Endothelial cell of umbilical vein (primary cell): ENCODE measurements at regions of chr16 and their contacts with region 1.

Region 1: GRCh38 chr16:68528686-68529379 is 10.3 kb upstream of the ZFP90 start:
- DNase-seq: peak; percentile 77
- H3K4me3 ChIP-seq: no peak overlapping the region
- H3K27ac ChIP-seq: no peak overlapping the region
- H3K4me1 ChIP-seq: peaks cover 10% of the 10 kb centered on the region
- H3K27me3 ChIP-seq: peaks cover 2 to 3% of the 10 kb centered on the region in 2 experiments
- CTCF ChIP-seq: peak; percentile 88 to 96
- POLR2A ChIP-seq: no peak

Region 2: GRCh38 chr16:68499006-68499405 is 29.8 kb before region 1 on chr16:
- CTCF ChIA-PET with region 1: no interaction called
- POLR2A ChIA-PET with region 1: no interaction called
- dilution Hi-C with region 1: no loop called
- intact Hi-C with region 1: no loop called
- DNase-seq: no peak
- H3K4me3 ChIP-seq: no peak overlapping the region
- H3K27ac ChIP-seq: no peak overlapping the region
- H3K4me1 ChIP-seq: no peaks in the 10 kb centered on the region
- H3K27me3 ChIP-seq: no peaks in the 10 kb centered on the region
- CTCF ChIP-seq: no peak
- POLR2A ChIP-seq: no peak

Region 3: GRCh38 chr16:68538880-68539701 is 10.3 kb after region 1 on chr16 and contains the start of gene ZFP90:
- CTCF ChIA-PET with region 1: interaction called, 8 read pairs
- POLR2A ChIA-PET with region 1: no interaction called
- dilution Hi-C with region 1: no loop called
- intact Hi-C with region 1: loop called (anchors 1 kb)
- DNase-seq: peak; percentile 85
- H3K4me3 ChIP-seq: peak within 1 kb of the TSS; percentile 69 to 78 (median 69)
- H3K27ac ChIP-seq: no peak within 1 kb of the TSS
- H3K4me1 ChIP-seq: peaks cover 8% of the 10 kb centered on the region
- H3K27me3 ChIP-seq: no peaks in the 10 kb centered on the region
- CTCF ChIP-seq: no peak
- POLR2A ChIP-seq: peak; percentile 81
- total RNA-seq, gene ZFP90: 18.4 and 22.4 TPM in 2 replicates

Region 4: DNA sequence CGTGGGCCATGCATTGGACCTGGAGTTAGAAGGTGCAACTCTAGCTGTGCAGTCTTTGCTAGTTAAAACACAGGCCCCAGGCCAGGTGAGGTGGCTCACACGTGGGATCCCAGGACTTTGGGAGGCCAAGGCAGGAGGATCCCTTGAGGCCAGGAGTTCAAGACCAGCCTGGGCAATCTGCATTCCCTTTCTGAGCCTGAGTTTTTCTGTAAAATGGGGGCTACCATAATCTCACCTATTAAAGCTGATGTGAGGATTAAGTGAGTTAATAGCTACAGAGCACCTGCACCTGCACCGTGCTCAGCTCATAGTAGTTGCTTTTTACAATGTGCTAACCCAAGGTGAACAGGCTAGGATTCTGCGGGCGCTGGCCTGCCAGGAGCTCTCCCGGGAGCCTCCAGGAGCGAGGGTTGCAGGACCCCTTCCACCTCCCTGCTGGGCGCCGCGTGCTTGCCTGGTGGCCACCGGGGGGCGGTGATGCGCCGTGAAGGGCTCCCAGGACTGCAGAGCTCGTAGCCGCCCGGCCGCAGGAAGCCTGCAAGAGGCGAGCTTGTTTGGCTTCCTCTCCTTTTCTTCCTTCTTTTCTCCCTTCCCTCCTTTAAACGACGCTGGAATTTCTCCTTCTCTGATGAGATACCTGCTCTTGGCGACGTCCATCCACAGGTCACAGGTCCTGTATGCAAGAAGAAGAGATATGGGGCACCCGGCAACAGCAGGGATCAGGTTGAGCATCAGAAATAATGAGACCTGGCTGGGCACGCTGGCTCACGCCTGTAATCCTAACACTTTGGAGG is 61.6 kb after region 1 on chr16:
- CTCF ChIA-PET with region 1: interaction called, 68 read pairs
- POLR2A ChIA-PET with region 1: no interaction called
- dilution Hi-C with region 1: no loop called
- intact Hi-C with region 1: loop called (anchors 5 kb)
- DNase-seq: peak; percentile 38
- H3K4me3 ChIP-seq: no peak overlapping the region
- H3K27ac ChIP-seq: no peak overlapping the region
- H3K4me1 ChIP-seq: no peaks in the 10 kb centered on the region
- H3K27me3 ChIP-seq: no peaks in the 10 kb centered on the region
- CTCF ChIP-seq: peak; percentile 58 to 79
- POLR2A ChIP-seq: no peak

Region 5: DNA sequence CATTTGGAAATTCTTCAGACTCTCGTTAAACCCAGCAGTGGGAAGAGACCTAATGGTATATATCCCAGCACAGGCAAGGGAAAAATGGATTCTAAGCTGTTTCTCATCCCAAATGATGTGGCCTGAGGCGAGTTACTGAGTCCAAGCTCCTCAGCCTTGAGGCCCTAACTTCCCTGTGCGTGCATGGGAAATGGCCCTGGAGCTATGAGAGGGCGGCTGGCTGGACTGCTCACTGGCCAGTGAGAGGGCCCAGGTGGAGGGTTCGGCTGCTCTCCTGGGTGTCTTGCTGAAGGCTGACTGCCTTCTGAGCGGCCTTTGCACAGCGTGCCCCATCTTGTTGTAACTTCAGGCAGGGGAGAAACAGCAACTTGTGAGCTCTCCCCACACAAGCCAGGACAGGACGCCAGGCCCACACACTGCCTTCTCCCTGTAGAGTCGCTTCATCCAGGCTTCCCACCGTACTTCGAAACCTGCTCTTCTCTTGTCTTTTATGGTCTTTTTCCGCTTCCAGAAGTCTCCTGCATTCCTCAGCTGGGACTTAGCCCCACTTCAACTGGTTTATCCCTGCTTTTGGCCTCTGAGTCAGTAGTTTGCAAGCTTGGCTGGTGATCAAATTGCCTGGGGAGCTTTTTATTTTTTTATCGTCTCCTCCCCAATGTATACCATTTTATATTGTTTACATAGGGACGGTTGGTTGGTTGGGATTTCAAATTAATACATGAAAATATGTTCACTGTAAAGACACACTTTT is 129.6 kb after region 1 on chr16:
- CTCF ChIA-PET with region 1: no interaction called
- POLR2A ChIA-PET with region 1: no interaction called
- dilution Hi-C with region 1: no loop called
- intact Hi-C with region 1: no loop called
- DNase-seq: no peak
- H3K4me3 ChIP-seq: no peak overlapping the region
- H3K27ac ChIP-seq: no peak overlapping the region
- H3K4me1 ChIP-seq: no peaks in the 10 kb centered on the region
- H3K27me3 ChIP-seq: no peaks in the 10 kb centered on the region
- CTCF ChIP-seq: no peak
- POLR2A ChIP-seq: no peak

Region 6: GRCh38 chr16:68704232-68704867 is 175.5 kb after region 1 on chr16:
- CTCF ChIA-PET with region 1: no interaction called
- POLR2A ChIA-PET with region 1: no interaction called
- dilution Hi-C with region 1: no loop called
- intact Hi-C with region 1: loop called (anchors 5 kb)
- DNase-seq: peak; percentile 52
- H3K4me3 ChIP-seq: no peak overlapping the region
- H3K27ac ChIP-seq: no peak overlapping the region
- H3K4me1 ChIP-seq: peaks cover 3% of the 10 kb centered on the region
- H3K27me3 ChIP-seq: no peaks in the 10 kb centered on the region
- CTCF ChIP-seq: peak; percentile 78 to 85
- POLR2A ChIP-seq: no peak

Region 7: DNA sequence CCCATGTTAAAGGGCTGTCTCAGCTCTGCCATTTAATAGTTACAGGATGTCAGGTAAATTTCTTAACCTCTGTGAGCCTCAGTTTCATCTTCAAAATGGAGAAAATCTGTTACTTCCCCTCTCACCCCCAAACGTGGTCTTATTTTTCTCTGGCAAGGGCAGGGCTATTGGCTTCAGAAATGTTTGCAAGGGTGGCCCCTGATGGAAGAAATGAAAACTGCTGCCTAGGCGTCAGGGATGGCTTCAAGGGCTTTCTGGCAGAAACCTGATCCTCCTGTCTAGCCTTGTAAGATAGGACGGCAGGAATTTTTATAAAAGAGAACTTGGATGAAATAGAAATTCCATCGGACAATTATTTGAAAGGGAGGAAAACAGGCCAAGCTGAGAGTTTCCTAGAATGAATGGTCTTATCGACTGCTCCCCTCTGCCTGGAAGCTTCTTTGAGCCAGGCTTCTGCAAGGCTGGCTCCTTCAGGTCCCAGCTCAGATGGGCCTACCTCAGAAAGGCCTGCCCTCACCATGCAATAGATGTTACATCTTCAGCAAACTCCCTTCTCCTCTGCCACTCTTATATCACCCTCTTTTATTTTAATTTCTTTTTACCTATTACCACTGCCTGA is 271.5 kb after region 1 on chr16:
- CTCF ChIA-PET with region 1: interaction called, 18 read pairs
- POLR2A ChIA-PET with region 1: no interaction called
- dilution Hi-C with region 1: no loop called
- intact Hi-C with region 1: loop called (anchors 1 kb)
- DNase-seq: peak; percentile 69
- H3K4me3 ChIP-seq: no peak overlapping the region
- H3K27ac ChIP-seq: no peak overlapping the region
- H3K4me1 ChIP-seq: no peaks in the 10 kb centered on the region
- H3K27me3 ChIP-seq: no peaks in the 10 kb centered on the region
- CTCF ChIP-seq: peak; percentile 35 to 63
- POLR2A ChIP-seq: no peak